Naive thymus-derived CD4-positive, alpha-beta T cell (primary cell): ENCODE measurements at regions of chr12 and their contacts with region 1.

Region 1: GRCh38 chr12:104381731-104382480 is 74.8 kb upstream of the CHST11 start:
- DNase-seq: peak; percentile 62 to 86 (median 74)
- ATAC-seq: peak; percentile 94
- H3K4me3 ChIP-seq: no peak overlapping the region
- H3K4me3 Mint-ChIP-seq: no peak overlapping the region
- H3K27ac ChIP-seq: no peak overlapping the region
- H3K27ac Mint-ChIP-seq: peak overlapping the region in 1 of 9 donors; percentile 17
- H3K4me1 ChIP-seq: peaks cover 0 to 6% of the 10 kb centered on the region in 2 donors
- H3K4me1 Mint-ChIP-seq: peaks cover 0 to 18% (median 6%) of the 10 kb centered on the region in 7 donors
- H3K27me3 ChIP-seq: no peaks in the 10 kb centered on the region
- H3K27me3 Mint-ChIP-seq: peaks cover 0 to 15% (median 10%) of the 10 kb centered on the region in 5 donors

Region 2: GRCh38 chr12:104223712-104224111 is 158.2 kb before region 1 on chr12:
- CTCF ChIA-PET with region 1: no interaction called
- POLR2A ChIA-PET with region 1: no interaction called
- intact Hi-C with region 1: no loop called
- DNase-seq: no peak
- ATAC-seq: no peak
- H3K4me3 ChIP-seq: no peak overlapping the region
- H3K4me3 Mint-ChIP-seq: no peak overlapping the region
- H3K27ac ChIP-seq: no peak overlapping the region
- H3K27ac Mint-ChIP-seq: no peak overlapping the region
- H3K4me1 ChIP-seq: no peaks in the 10 kb centered on the region
- H3K4me1 Mint-ChIP-seq: peaks cover 8 to 23% (median 13%) of the 10 kb centered on the region in 7 donors
- H3K27me3 ChIP-seq: no peaks in the 10 kb centered on the region
- H3K27me3 Mint-ChIP-seq: peaks cover 0 to 11% (median 0%) of the 10 kb centered on the region in 5 donors

Region 3: GRCh38 chr12:104671407-104672098 is 289.6 kb after region 1 on chr12:
- CTCF ChIA-PET with region 1: interaction called, 6 read pairs
- POLR2A ChIA-PET with region 1: no interaction called
- intact Hi-C with region 1: loop called in 1 of 2 experiments (anchors 5 kb)
- DNase-seq: peak in 3 of 9 donors; percentile 30 to 80 (median 58)
- ATAC-seq: peak; percentile 80
- H3K4me3 ChIP-seq: no peak overlapping the region
- H3K4me3 Mint-ChIP-seq: peak overlapping the region in 7 of 10 donors; percentile 6 to 67 (median 21)
- H3K27ac ChIP-seq: no peak overlapping the region
- H3K27ac Mint-ChIP-seq: peak overlapping the region in 7 of 9 donors; percentile 11 to 92 (median 67)
- H3K4me1 ChIP-seq: peaks cover 25 to 36% of the 10 kb centered on the region in 2 donors
- H3K4me1 Mint-ChIP-seq: peaks cover 32 to 64% (median 48%) of the 10 kb centered on the region in 7 donors
- H3K27me3 ChIP-seq: no peaks in the 10 kb centered on the region
- H3K27me3 Mint-ChIP-seq: no peaks in the 10 kb centered on the region

Region 4: DNA sequence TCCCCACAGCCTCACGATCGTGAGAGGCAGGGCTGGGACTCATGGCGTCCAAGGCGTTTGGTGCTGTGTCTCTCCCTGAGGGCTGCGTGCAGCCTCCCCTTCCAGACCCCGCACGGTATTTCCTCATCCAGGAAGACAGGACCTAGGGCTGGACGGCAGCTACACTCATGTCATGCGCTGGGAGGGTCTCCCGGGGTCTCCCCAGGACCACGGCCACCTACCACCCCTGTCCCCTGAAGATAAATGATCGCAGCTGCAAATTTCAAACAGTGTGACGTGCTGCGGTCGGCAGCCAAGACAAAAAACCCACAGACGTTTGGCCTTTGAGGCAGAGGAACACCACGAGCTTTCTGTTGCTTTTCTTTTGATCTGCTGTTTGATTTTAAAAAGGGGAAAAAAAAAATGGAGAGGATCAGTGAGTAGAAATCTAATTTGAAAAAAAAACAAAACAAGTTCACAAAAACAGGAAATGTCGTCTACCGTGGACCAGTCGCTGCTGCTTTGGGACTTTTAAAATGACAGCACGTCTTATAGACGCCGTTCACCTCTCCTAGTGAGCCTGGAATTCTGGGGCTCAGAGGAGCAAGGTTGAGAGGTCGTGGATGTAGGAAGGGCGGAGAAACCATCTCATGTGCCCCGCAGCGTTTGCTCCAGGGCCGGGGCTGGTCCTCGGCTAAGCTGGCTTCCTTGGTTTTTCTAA is 338.6 kb after region 1 on chr12:
- CTCF ChIA-PET with region 1: no interaction called
- POLR2A ChIA-PET with region 1: no interaction called
- intact Hi-C with region 1: loop called in 1 of 2 experiments (anchors 10 kb)
- DNase-seq: peak; percentile 32 to 92 (median 88)
- ATAC-seq: peak; percentile 87
- H3K4me3 ChIP-seq: peak overlapping the region; percentile 72
- H3K4me3 Mint-ChIP-seq: peak overlapping the region; percentile 73 to 95 (median 81)
- H3K27ac ChIP-seq: peak overlapping the region; percentile 77
- H3K27ac Mint-ChIP-seq: peak overlapping the region; percentile 86 to 96 (median 92)
- H3K4me1 ChIP-seq: peaks cover 30 to 39% of the 10 kb centered on the region in 2 donors
- H3K4me1 Mint-ChIP-seq: peaks cover 41 to 82% (median 65%) of the 10 kb centered on the region in 7 donors
- H3K27me3 ChIP-seq: no peaks in the 10 kb centered on the region
- H3K27me3 Mint-ChIP-seq: peaks cover 0 to 3% (median 0%) of the 10 kb centered on the region in 5 donors

Region 5: GRCh38 chr12:104865080-104865479 is 483.2 kb after region 1 on chr12:
- CTCF ChIA-PET with region 1: interaction called, 11 read pairs
- POLR2A ChIA-PET with region 1: no interaction called
- intact Hi-C with region 1: no loop called
- DNase-seq: no peak
- ATAC-seq: peak; percentile 29
- H3K4me3 ChIP-seq: no peak overlapping the region
- H3K4me3 Mint-ChIP-seq: no peak overlapping the region
- H3K27ac ChIP-seq: no peak overlapping the region
- H3K27ac Mint-ChIP-seq: no peak overlapping the region
- H3K4me1 ChIP-seq: no peaks in the 10 kb centered on the region
- H3K4me1 Mint-ChIP-seq: peaks cover 0 to 12% (median 8%) of the 10 kb centered on the region in 7 donors
- H3K27me3 ChIP-seq: no peaks in the 10 kb centered on the region
- H3K27me3 Mint-ChIP-seq: peaks cover 0 to 12% (median 10%) of the 10 kb centered on the region in 5 donors

Region 6: GRCh38 chr12:105382771-105383622 is 1001.1 kb after region 1 on chr12:
- CTCF ChIA-PET with region 1: no interaction called
- POLR2A ChIA-PET with region 1: no interaction called
- intact Hi-C with region 1: loop called in 1 of 2 experiments (anchors 2 kb)
- DNase-seq: peak in 7 of 9 donors; percentile 29 to 65 (median 51)
- ATAC-seq: peak; percentile 73
- H3K4me3 ChIP-seq: no peak overlapping the region
- H3K4me3 Mint-ChIP-seq: no peak overlapping the region
- H3K27ac ChIP-seq: no peak overlapping the region
- H3K27ac Mint-ChIP-seq: no peak overlapping the region
- H3K4me1 ChIP-seq: no peaks in the 10 kb centered on the region
- H3K4me1 Mint-ChIP-seq: no peaks in the 10 kb centered on the region
- H3K27me3 ChIP-seq: no peaks in the 10 kb centered on the region
- H3K27me3 Mint-ChIP-seq: no peaks in the 10 kb centered on the region